ENCODE measurements at regions of chr22 and their contacts with region 1.

Region 1: DNA sequence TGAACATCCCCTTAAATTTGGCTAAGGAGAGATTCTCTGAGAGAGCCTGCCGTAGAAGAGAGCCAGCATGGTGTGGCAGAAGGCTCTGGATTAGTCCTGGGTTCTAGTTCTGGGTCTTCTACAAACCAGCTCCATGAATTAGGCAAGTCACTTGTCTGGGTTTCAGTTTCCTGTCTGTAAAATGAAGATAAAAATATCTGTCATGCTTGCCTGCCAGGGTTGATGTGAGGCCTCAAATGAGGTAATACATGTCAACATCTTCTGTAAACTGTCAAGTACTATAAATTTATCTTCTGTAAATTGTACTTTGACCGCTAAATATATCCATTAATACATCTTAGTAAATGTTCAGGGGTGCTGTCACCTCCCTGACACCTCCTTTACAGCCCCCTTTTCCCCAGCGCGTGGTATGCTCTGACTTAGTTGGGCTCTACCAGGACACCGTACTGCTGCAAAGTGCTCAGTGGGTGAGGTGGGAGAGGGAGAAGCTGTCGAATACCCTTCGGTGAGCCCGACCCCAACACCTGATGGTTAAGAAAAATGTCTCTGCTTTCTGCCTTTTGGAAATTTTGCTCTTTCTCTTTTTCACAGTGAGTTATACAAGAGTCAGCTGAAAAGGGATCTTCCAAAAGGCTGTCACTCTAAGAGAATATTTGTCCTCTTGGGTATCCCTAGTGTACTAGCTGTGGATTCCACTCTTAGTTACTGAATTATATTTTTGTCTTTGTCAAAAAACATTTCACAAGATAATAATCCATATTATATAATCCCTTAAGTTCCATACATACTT is 15.0 kb downstream of the RBX1 start:
- DNase-seq: no peak
- ATAC-seq: peak; percentile 30 to 61 (median 50)
- H3K4me3 ChIP-seq: no peak overlapping the region
- H3K27ac ChIP-seq: peak overlapping the region in 6 of 12 donors; percentile 8 to 73 (median 43)
- H3K4me1 ChIP-seq: peaks cover 0 to 33% (median 17%) of the 10 kb centered on the region in 12 donors
- H3K27me3 ChIP-seq: no peaks in the 10 kb centered on the region
- CTCF ChIP-seq: no peak
- POLR2A ChIP-seq: no peak

Region 2: DNA sequence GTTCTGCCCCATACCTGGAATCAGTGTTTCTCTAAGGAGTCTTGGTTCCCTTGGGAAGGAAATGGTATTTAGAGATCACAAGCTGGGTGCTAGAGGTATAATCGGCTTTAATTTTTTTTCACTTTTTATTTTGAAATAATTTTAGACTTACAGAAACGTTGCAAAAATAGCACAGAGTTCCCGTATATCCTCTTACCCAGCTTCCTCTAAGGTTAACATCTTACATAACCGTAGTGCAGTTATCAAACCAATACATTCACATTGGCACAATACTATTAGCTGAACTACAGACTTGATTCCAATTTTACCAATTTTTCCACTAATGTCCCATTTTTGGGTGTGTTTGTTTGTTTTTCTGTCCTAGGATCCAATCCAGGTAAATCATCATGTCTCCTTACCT is 48.9 kb after region 1 on chr22:
- intact Hi-C with region 1: loop called in 1 of 10 experiments (anchors 10 kb)
- DNase-seq: no peak
- ATAC-seq: no peak
- H3K4me3 ChIP-seq: no peak overlapping the region
- H3K27ac ChIP-seq: no peak overlapping the region
- H3K4me1 ChIP-seq: peaks cover 0 to 12% (median 0%) of the 10 kb centered on the region in 12 donors
- H3K27me3 ChIP-seq: no peaks in the 10 kb centered on the region
- CTCF ChIP-seq: no peak
- POLR2A ChIP-seq: no peak

Region 3: GRCh38 chr22:41048791-41049717 is 82.9 kb after region 1 on chr22:
- intact Hi-C with region 1: no loop called
- DNase-seq: peak; percentile 75 to 83 (median 77)
- ATAC-seq: peak; percentile 88 to 98 (median 94)
- H3K4me3 ChIP-seq: peak overlapping the region in 9 of 12 donors; percentile 25 to 48 (median 35)
- H3K27ac ChIP-seq: peak overlapping the region; percentile 23 to 76 (median 62)
- H3K4me1 ChIP-seq: peaks cover 0 to 23% (median 10%) of the 10 kb centered on the region in 12 donors
- H3K27me3 ChIP-seq: no peaks in the 10 kb centered on the region
- CTCF ChIP-seq: no peak
- POLR2A ChIP-seq: no peak